Posterior cingulate gyrus (tissue), 11 donors: ENCODE measurements at regions of chr17 and their contacts with region 1.

Region 1: GRCh38 chr17:63741221-63742049 is at the start of gene STRADA:
- DNase-seq: peak; percentile 96 to 100 (median 98)

Region 2: DNA sequence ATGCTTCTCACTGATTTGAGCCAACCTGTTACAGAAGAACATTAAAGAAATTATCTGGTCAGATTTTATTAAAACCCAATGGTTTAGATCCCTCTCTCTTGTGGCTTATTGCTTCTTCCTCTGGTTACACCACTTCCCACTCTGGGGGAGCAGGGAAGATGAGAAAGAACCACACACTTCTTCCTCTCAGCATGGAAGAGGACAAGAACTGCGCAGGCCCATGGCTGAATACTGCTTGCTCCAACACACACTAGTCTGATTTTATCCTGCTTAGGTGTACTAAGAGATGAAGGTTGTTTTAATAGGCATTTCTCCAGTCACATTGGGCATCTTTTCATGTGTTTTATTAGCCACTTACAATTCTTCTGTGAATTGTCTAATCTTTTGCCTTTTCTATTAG is 91.6 kb before region 1 on chr17:
- intact Hi-C with region 1: no loop called
- DNase-seq: no peak

Region 3: DNA sequence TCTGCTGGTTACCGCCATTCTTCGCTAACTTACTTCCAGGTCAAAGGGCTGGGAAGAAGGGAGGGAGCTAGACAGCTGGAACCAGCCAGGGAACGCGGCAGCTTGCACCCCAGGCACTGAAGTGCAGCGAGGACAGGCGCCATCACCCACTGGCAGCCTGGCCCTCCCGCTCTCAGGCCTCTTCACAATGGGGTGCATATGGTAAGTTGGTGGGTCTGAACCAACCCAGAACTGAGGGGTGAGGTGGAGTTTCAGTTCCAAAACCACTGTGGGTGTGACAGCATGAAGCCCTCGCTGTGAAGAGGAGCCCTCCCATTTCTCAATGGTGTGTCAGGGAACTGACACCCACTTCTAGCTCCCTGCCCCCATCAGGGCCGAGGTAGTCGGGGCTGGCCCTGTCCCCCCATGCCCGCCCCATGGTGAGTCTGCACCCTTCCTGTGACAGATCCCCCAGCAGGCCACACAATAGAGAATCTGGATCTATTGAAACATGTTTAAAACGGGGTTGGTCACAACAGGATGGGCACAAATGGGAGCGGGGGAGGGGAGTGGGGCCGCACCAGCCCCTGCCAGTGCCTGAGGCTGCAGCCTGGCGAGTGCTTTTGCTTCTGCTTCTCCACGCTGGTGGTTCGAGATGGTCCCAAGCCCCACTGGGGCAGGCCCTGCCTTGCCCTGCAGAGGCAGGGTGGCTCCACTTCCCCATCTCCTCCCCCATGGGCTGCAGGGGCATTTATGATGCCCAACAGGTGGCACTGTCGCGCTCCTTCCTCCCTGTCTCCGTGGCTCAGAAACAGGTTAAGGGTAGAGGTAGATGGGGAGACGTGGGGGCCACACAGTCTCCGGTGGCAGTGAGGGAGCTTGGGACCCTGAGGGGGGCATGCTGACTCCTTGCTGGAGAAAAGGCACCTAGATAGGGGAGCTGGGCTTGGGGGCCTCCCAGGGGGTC is 43.8 kb before region 1 on chr17:
- intact Hi-C with region 1: loop called (anchors 5 kb)
- DNase-seq: peak in 1 of 10 donors; percentile 81

Region 4: DNA sequence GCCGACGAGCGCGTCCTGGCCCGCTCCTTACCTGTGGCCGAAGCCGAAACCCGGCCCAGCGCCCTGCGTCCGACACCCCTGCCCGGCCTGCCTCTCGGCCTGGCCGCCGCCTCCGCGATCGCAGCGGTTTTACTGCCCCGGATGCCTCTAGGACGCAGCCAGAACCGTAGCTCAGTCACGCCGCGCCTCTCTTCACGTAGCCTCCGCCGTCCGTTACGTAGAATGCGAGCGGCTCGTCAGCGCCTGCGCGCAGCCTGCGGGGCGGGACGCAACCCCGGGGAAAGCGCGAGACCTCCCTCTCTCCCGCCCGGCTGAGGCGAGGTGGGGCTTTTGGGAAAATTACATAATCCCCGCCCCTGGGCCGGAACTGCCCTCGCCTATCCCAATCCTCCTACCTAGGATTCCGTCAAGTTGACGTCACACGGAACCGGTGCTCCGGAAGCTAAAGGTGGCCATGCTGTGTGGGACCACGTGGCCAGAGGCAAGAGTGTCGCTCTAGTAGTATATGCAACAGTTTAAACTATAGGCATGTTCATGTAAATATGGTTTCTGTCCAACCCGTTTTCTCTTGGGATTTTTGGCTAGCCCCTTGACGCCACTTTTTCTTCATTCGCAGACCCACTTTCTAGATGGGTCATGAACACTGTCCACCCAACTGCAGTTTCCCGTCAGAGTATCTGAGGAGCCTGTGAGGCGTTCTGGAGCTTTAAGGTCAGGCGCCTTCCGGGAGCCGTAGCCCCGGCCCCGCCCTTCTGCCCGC is 32.1 kb after region 1 on chr17 and contains the start of gene CCDC47:
- intact Hi-C with region 1: loop called (anchors 1 kb)
- DNase-seq: peak; percentile 99 to 100 (median 100)